Caco-2 (cell line): ENCODE measurements at regions of chr14 and their contacts with region 1.

Region 1: GRCh38 chr14:56339855-56340701 is 221.9 kb downstream of the PELI2 start:
- DNase-seq: peak; percentile 38 to 51
- H3K4me3 ChIP-seq: no peak overlapping the region
- H3K4me3 Mint-ChIP-seq: no peak overlapping the region
- H3K27ac Mint-ChIP-seq: peak overlapping the region; percentile 24
- H3K4me1 ChIP-seq: peaks cover 17% of the 10 kb centered on the region
- H3K4me1 Mint-ChIP-seq: peaks cover 14% of the 10 kb centered on the region
- H3K27me3 ChIP-seq: no peaks in the 10 kb centered on the region
- H3K27me3 Mint-ChIP-seq: no peaks in the 10 kb centered on the region
- CTCF ChIP-seq: peak; percentile 32 to 79

Region 2: GRCh38 chr14:55438066-55438683 is 901.9 kb before region 1 on chr14:
- CTCF ChIA-PET with region 1: no interaction called
- POLR2A ChIA-PET with region 1: no interaction called
- intact Hi-C with region 1: loop called (anchors 5 kb)
- DNase-seq: peak in 1 of 2 experiments; percentile 49
- H3K4me3 ChIP-seq: no peak overlapping the region
- H3K4me3 Mint-ChIP-seq: no peak overlapping the region
- H3K27ac Mint-ChIP-seq: no peak overlapping the region
- H3K4me1 ChIP-seq: no peaks in the 10 kb centered on the region
- H3K4me1 Mint-ChIP-seq: no peaks in the 10 kb centered on the region
- H3K27me3 ChIP-seq: no peaks in the 10 kb centered on the region
- H3K27me3 Mint-ChIP-seq: peaks cover 3% of the 10 kb centered on the region
- CTCF ChIP-seq: peak; percentile 69 to 70

Region 3: GRCh38 chr14:55707365-55707804 is 632.7 kb before region 1 on chr14:
- CTCF ChIA-PET with region 1: no interaction called
- POLR2A ChIA-PET with region 1: no interaction called
- intact Hi-C with region 1: loop called (anchors 1 kb)
- DNase-seq: peak in 1 of 2 experiments; percentile 32
- H3K4me3 ChIP-seq: no peak overlapping the region
- H3K4me3 Mint-ChIP-seq: no peak overlapping the region
- H3K27ac Mint-ChIP-seq: no peak overlapping the region
- H3K4me1 ChIP-seq: peaks cover 4% of the 10 kb centered on the region; the same call in 1 of the 2 replicates
- H3K4me1 Mint-ChIP-seq: no peaks in the 10 kb centered on the region
- H3K27me3 ChIP-seq: no peaks in the 10 kb centered on the region
- H3K27me3 Mint-ChIP-seq: no peaks in the 10 kb centered on the region
- CTCF ChIP-seq: peak; percentile 53 to 65

Region 4: GRCh38 chr14:56378475-56378877 is 38.4 kb after region 1 on chr14:
- CTCF ChIA-PET with region 1: no interaction called
- POLR2A ChIA-PET with region 1: no interaction called
- intact Hi-C with region 1: no loop called
- DNase-seq: no peak
- H3K4me3 ChIP-seq: no peak overlapping the region
- H3K4me3 Mint-ChIP-seq: no peak overlapping the region
- H3K27ac Mint-ChIP-seq: no peak overlapping the region
- H3K4me1 ChIP-seq: no peaks in the 10 kb centered on the region
- H3K4me1 Mint-ChIP-seq: no peaks in the 10 kb centered on the region
- H3K27me3 ChIP-seq: no peaks in the 10 kb centered on the region; the same call in 1 of the 2 replicates
- H3K27me3 Mint-ChIP-seq: peaks cover 20% of the 10 kb centered on the region
- CTCF ChIP-seq: no peak

Region 5: GRCh38 chr14:56491299-56492285 is 151.5 kb after region 1 on chr14:
- CTCF ChIA-PET with region 1: no interaction called
- POLR2A ChIA-PET with region 1: no interaction called
- intact Hi-C with region 1: no loop called
- DNase-seq: peak; percentile 70 to 71
- H3K4me3 ChIP-seq: no peak overlapping the region
- H3K4me3 Mint-ChIP-seq: no peak overlapping the region
- H3K27ac Mint-ChIP-seq: no peak overlapping the region
- H3K4me1 ChIP-seq: no peaks in the 10 kb centered on the region
- H3K4me1 Mint-ChIP-seq: no peaks in the 10 kb centered on the region
- H3K27me3 ChIP-seq: no peaks in the 10 kb centered on the region
- H3K27me3 Mint-ChIP-seq: peaks cover 9% of the 10 kb centered on the region
- CTCF ChIP-seq: peak; percentile 71 to 78